PC-9 (cell line): ENCODE measurements at regions of chr22 and their contacts with region 1.

Region 1: DNA sequence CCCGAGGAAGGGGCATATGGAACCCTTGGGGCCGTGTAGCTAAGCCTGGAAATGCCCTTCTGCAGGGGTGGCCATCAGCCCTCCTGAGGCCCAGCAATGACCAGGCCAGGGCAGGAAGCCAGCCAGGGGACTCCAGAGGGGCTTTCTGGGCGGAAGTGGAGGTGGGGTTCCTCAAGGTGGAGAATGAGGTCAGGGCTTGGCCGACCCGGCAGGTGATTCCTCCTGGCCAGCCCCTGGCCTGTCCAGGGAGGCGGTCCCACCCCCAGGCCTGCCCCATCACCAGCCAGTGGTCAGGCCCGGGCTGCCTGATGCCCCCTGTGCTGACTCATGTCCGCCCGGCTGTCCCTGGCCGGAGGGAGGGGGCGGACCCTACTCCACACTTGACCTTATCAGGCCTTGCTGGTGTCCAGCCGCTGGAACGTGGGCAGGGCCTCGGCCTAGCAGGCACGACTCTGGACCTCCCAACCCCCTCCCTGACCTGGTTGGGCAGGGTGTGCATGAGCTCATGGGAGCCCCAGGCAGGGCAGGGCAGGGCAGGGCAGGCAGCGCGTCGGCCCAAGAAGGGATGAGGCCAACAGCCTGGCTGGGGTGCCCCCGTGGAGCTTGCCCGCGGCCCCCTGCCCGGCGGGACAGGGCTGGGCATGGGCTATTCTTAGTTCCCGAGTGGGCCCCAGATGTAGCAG is 36.0 kb downstream of the RPL3 start:
- DNase-seq: peak; percentile 99 to 100
- H3K4me3 ChIP-seq: peak overlapping the region; percentile 2; the same call in 1 of the 2 replicates
- H3K27ac ChIP-seq: peak overlapping the region; percentile 77
- H3K4me1 ChIP-seq: peaks cover 51% of the 10 kb centered on the region
- H3K27me3 ChIP-seq: no peaks in the 10 kb centered on the region
- CTCF ChIP-seq: no peak

Region 2: GRCh38 chr22:39170825-39171622 is 112.4 kb before region 1 on chr22:
- CTCF ChIA-PET with region 1: interaction called, 7 read pairs
- POLR2A ChIA-PET with region 1: interaction called, 6 read pairs
- intact Hi-C with region 1: loop called (anchors 1 kb)
- DNase-seq: peak; percentile 53 to 91
- H3K4me3 ChIP-seq: no peak overlapping the region
- H3K27ac ChIP-seq: no peak overlapping the region
- H3K4me1 ChIP-seq: peaks cover 50% of the 10 kb centered on the region
- H3K27me3 ChIP-seq: no peaks in the 10 kb centered on the region
- CTCF ChIP-seq: peak; percentile 100

Region 3: GRCh38 chr22:39212721-39213376 is 70.6 kb before region 1 on chr22:
- CTCF ChIA-PET with region 1: no interaction called
- POLR2A ChIA-PET with region 1: interaction called, 8 read pairs
- intact Hi-C with region 1: loop called (anchors 1 kb)
- DNase-seq: peak; percentile 93 to 99
- H3K4me3 ChIP-seq: peak overlapping the region; percentile 41; the same call in 1 of the 2 replicates
- H3K27ac ChIP-seq: peak overlapping the region; percentile 87
- H3K4me1 ChIP-seq: peaks cover 55% of the 10 kb centered on the region
- H3K27me3 ChIP-seq: no peaks in the 10 kb centered on the region
- CTCF ChIP-seq: peak; percentile 61; the same call in 1 of the 2 replicates

Region 4: DNA sequence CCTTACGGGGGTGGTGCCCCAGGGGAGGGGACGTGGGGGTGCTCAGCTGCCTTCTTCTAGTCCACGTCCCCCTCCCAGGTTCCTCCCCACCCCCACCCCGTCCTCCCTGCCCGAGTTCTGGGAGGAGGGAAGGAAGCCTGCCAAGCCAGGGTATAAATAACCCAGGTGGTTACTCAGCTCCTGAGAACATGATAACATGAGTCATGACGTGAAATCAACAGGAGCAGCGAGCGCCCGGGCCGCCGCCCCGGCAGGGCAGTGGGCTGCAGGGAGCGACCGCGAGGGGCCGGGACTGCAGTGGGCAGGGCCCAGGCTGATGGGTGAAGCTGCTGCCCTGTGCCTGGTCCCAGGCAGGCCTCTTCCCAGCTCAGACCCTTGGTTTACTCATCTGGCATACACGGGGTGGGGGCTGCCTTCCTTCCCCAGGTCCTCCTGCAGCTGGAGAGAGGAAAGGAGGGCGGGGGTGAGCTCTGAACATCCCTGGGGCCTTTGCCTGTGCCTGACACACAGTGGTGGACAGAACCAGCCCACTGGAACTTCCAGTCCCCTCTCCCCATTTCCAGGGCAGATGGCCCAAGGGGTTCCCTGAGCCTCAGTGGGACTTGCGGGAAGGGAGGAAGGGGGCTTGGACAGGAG is 29.9 kb before region 1 on chr22:
- CTCF ChIA-PET with region 1: no interaction called
- POLR2A ChIA-PET with region 1: interaction called, 8 read pairs
- intact Hi-C with region 1: loop called (anchors 1 kb)
- DNase-seq: peak; percentile 84 to 86
- H3K4me3 ChIP-seq: peak overlapping the region; percentile 33; the same call in 1 of the 2 replicates
- H3K27ac ChIP-seq: peak overlapping the region; percentile 51
- H3K4me1 ChIP-seq: peaks cover 46% of the 10 kb centered on the region
- H3K27me3 ChIP-seq: no peaks in the 10 kb centered on the region
- CTCF ChIP-seq: no peak

Region 5: DNA sequence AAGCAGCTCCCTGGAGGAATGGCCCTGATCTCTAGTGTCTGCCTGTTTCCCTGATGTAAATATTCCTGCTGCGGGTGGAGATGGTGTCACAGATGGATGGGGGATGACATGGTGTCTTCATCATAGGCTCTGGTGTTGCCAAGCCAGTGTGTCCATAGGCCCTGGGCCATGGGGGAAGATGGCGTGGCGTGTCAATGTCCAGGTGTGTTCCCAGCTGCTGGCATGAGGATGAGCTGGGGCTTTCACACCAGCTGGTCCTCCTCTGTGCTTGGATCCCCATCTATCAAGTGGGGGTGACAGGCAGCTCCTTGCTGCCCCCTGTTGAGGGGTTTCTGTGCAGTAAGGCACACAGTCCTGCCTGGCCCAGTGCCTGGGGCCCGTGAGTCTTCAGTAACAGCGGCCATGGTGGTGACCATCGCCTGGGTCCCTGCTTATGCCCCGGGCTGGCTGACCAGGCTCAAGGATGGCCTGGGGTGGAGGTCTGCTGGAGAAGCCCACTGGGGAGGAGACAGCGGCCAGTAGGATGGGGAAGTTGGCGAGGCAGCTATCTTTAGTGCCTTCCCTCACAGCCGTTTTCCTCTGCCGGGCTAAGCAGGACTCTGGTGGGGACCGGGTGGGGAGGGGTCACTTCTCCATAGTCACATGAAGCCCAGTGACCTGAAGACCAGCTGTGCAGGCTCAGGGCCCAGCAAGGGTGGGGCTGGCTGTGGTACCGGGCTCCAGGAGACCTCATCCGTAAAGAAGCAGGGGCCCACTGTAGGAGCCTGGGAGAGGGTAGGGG is 23.3 kb after region 1 on chr22:
- CTCF ChIA-PET with region 1: interaction called, 8 read pairs
- POLR2A ChIA-PET with region 1: interaction called, 3 read pairs
- intact Hi-C with region 1: loop called (anchors 1 kb)
- DNase-seq: peak in 1 of 2 experiments; percentile 65
- H3K4me3 ChIP-seq: no peak overlapping the region
- H3K27ac ChIP-seq: no peak overlapping the region
- H3K4me1 ChIP-seq: peaks cover 48% of the 10 kb centered on the region
- H3K27me3 ChIP-seq: no peaks in the 10 kb centered on the region
- CTCF ChIP-seq: peak; percentile 65

Region 6: DNA sequence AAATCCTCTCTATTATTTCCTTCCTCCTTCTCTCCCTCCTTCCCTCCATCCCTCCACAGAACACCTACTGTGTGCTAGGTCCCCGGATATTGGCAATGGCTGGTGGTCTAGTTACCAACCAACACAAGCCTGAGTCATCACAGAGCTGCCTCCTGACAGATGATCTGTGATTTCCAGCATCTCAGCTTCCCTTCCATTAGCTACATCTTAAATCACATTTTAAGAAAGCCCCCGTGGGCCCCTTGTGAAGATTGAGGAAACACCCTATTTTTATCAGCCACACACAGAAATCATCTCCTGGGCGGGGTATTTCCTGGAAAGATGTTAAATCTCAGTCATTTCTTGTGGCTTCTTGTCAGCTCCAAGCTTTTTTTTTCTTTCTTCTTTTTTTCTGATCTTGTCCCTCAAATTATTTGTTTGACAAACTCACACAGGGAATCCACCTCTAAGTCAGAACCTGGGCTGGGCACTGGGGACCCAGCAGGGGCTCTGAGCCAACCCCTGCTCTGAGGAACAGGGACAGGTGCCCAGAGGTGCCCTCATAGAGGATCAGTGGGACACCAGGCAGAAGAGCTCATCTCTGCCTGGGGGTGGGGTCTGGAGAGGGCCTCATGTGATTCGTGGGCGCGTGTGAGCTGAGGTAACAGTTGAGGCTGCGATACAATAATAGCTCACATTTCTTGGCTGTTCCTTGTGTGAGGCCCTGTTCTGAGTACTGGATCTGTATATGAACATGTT is 329.5 kb after region 1 on chr22:
- CTCF ChIA-PET with region 1: no interaction called
- POLR2A ChIA-PET with region 1: no interaction called
- intact Hi-C with region 1: no loop called
- DNase-seq: no peak
- H3K4me3 ChIP-seq: no peak overlapping the region
- H3K27ac ChIP-seq: no peak overlapping the region
- H3K4me1 ChIP-seq: no peaks in the 10 kb centered on the region
- H3K27me3 ChIP-seq: peaks cover 11% of the 10 kb centered on the region; the same call in 1 of the 2 replicates
- CTCF ChIP-seq: no peak

Region 7: DNA sequence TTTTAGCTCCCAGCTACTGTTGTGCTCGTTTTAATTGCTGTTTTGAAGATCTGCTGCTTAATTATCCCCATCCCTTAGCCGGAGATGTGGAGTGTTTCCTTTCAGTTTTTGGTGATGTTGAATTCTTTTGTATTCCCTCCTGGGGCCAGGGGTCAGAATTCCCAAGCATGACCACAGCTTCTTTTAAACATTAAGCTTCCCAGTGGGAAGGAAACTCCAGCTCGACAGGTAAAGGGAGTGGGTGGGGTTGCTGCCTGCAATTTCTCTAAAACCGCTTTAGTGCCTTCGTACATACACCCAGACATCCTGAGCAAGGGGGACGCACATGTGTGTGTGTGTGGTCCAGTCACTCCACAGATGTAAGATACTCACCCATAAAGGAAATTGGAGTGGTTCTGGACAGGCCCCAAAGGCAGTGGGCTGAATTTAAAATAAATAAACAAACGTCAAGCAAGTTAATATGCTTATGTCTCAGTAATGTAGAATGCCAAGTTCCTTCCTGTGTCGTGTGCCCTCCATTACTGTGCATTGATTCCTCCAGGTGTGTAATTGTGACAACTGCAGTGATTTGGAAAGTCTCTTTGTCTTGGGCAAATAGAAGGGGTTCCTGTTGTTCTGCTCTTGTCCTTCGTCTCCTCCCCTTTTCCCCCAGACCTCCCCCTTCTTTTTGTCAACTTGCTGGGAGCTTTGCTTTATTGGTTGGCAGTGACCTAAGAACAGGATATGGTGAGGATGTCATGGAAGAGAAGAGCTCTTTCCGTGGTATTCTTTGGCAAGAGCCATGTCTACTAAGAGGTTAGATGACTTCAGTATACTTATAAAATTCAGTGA is 1043.7 kb after region 1 on chr22:
- CTCF ChIA-PET with region 1: no interaction called
- POLR2A ChIA-PET with region 1: no interaction called
- intact Hi-C with region 1: no loop called
- DNase-seq: no peak
- H3K4me3 ChIP-seq: no peak overlapping the region
- H3K27ac ChIP-seq: no peak overlapping the region
- H3K4me1 ChIP-seq: no peaks in the 10 kb centered on the region
- H3K27me3 ChIP-seq: no peaks in the 10 kb centered on the region
- CTCF ChIP-seq: no peak